GM23248 (cell line): ENCODE measurements at regions of chr9 and their contacts with region 1.

Region 1: GRCh38 chr9:136122425-136123383 is 4.0 kb upstream of the TMEM250 start:
- DNase-seq: peak; percentile 74
- H3K4me3 ChIP-seq: peak overlapping the region; percentile 54
- H3K27ac ChIP-seq: no peak overlapping the region
- H3K4me1 ChIP-seq: peaks cover 5% of the 10 kb centered on the region; the same call in 1 of the 2 replicates
- H3K27me3 ChIP-seq: peaks cover 19% of the 10 kb centered on the region

Region 2: DNA sequence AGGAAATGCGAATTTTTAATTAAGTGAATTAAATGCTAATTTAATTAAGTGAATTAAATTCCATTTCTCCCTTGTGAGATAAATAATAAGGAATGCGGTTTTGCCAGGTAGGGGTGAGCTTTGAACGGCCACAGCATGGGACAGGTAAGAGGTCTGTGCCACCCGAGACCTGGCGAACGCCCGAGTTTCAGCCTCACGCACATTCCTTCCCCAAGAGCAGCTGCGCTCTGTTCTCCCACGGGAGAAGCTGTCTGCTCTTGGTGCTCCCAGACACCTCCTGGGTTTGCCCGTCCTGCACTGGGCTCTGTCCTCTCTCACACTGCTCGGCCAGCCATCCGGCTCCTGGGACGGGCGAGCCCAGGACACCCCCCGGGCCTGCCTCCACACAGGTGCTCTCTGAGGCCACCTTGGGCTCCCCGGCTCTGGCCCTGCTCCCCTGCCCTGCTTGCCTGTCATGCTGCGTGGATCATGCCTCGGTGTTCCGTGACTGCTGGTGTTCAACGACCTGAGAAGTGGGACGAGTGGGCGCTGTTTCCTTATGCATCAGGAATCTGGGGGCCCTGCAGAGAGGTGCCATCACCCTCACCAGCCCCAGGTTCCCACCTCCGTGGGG is 201.6 kb before region 1 on chr9:
- in situ Hi-C with region 1: no loop called
- DNase-seq: no peak
- H3K4me3 ChIP-seq: no peak overlapping the region
- H3K27ac ChIP-seq: no peak overlapping the region
- H3K4me1 ChIP-seq: peaks cover 3% of the 10 kb centered on the region; the same call in 1 of the 2 replicates
- H3K27me3 ChIP-seq: no peaks in the 10 kb centered on the region

Region 3: DNA sequence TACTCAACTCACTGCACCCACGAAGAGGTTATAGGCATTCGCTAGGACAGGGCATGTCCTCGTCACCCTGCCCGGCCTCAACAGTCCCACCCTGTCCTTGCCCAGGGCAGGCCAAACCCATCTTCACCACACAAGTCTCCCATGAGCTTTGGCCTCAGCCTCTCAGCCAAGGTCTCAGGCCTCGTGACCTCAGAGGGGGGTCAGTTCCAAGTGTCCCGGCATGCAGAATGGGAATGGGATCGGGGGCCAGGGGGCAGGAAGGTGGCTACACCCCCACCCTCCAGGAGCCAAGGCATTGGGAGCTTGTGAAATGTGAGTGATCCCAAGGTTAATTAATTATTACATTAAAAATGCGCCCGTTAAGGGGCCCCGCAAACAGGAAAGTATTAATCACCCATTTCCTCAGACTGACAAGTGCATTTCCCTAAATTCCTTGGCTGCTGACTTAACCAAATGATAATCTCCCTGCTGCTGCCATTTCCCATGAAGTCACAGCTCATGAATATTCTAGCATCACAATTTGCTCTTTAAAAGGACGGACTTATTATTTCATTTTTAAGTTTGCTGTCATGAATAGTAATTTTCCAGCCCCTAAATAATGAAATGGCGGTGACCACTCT is 153.5 kb before region 1 on chr9:
- in situ Hi-C with region 1: loop called (anchors 5 kb)
- DNase-seq: no peak
- H3K4me3 ChIP-seq: no peak overlapping the region
- H3K27ac ChIP-seq: no peak overlapping the region
- H3K4me1 ChIP-seq: no peaks in the 10 kb centered on the region
- H3K27me3 ChIP-seq: peaks cover 10% of the 10 kb centered on the region; the same call in 1 of the 2 replicates